ENCODE measurements at regions of chr6 and their contacts with region 1.

Region 1: GRCh38 chr6:90080876-90081481 is 186.7 kb downstream of the GJA10 start:
- DNase-seq: peak; percentile 40 to 89 (median 68)
- ATAC-seq: peak; percentile 80
- H3K4me3 ChIP-seq: peak overlapping the region; percentile 54 to 66
- H3K4me3 Mint-ChIP-seq: peak overlapping the region; percentile 98
- H3K27ac ChIP-seq: peak overlapping the region; percentile 66 to 77
- H3K27ac Mint-ChIP-seq: peak overlapping the region; percentile 99
- H3K4me1 ChIP-seq: peaks cover 75% of the 10 kb centered on the region
- H3K4me1 Mint-ChIP-seq: peaks cover 89% of the 10 kb centered on the region
- H3K27me3 ChIP-seq: no peaks in the 10 kb centered on the region
- H3K27me3 Mint-ChIP-seq: no peaks in the 10 kb centered on the region
- CTCF ChIP-seq: no peak

Region 2: GRCh38 chr6:89952686-89953085 is 128.3 kb before region 1 on chr6:
- CTCF ChIA-PET with region 1: no interaction called
- POLR2A ChIA-PET with region 1: interaction called, 3 read pairs
- intact Hi-C with region 1: loop called (anchors 1 to 10 kb)
- DNase-seq: peak; percentile 36 to 92 (median 65)
- ATAC-seq: peak; percentile 84
- H3K4me3 ChIP-seq: no peak overlapping the region
- H3K4me3 Mint-ChIP-seq: peak overlapping the region; percentile 71
- H3K27ac ChIP-seq: peak overlapping the region; percentile 24 to 47
- H3K27ac Mint-ChIP-seq: peak overlapping the region; percentile 94
- H3K4me1 ChIP-seq: peaks cover 55% of the 10 kb centered on the region
- H3K4me1 Mint-ChIP-seq: peaks cover 70% of the 10 kb centered on the region
- H3K27me3 ChIP-seq: no peaks in the 10 kb centered on the region
- H3K27me3 Mint-ChIP-seq: no peaks in the 10 kb centered on the region
- CTCF ChIP-seq: no peak

Region 3: GRCh38 chr6:89984926-89985750 is 95.8 kb before region 1 on chr6:
- CTCF ChIA-PET with region 1: no interaction called
- POLR2A ChIA-PET with region 1: no interaction called
- intact Hi-C with region 1: no loop called
- DNase-seq: no peak
- ATAC-seq: no peak
- H3K4me3 ChIP-seq: no peak overlapping the region
- H3K4me3 Mint-ChIP-seq: no peak overlapping the region
- H3K27ac ChIP-seq: no peak overlapping the region
- H3K27ac Mint-ChIP-seq: peak overlapping the region; percentile 55
- H3K4me1 ChIP-seq: peaks cover 37% of the 10 kb centered on the region
- H3K4me1 Mint-ChIP-seq: peaks cover 71% of the 10 kb centered on the region
- H3K27me3 ChIP-seq: no peaks in the 10 kb centered on the region
- H3K27me3 Mint-ChIP-seq: no peaks in the 10 kb centered on the region
- CTCF ChIP-seq: no peak

Region 4: DNA sequence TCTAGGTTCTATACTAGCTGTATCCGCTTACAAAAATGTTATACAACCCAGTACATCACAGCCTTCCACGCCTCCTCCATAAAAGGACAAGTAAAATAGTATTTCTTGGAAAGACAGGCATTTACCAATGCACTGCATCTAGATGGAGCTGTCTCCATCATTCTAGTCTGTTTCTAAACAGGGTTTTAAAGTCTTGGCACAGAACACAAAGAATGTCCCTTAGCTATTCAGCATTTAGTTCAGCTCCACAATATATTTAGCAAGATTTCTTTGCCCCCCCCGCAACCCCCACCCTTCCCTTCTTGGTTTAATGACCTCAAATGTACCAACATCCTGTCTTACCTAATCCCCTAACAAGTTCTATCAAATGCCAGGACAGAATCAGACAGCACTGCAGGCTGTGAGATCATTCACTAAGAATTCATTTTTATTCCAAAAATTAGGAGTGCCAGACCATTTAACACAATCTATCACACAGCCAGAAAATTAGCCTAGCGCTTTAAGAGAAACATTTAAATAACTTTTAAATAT is 17.1 kb after region 1 on chr6:
- CTCF ChIA-PET with region 1: interaction called, 4 read pairs
- POLR2A ChIA-PET with region 1: interaction called, 3 read pairs
- intact Hi-C with region 1: loop called in 1 of 2 experiments (anchors 2 kb)
- DNase-seq: peak in 4 of 9 experiments; percentile 24 to 64 (median 44)
- ATAC-seq: peak; percentile 74
- H3K4me3 ChIP-seq: no peak overlapping the region
- H3K4me3 Mint-ChIP-seq: no peak overlapping the region
- H3K27ac ChIP-seq: no peak overlapping the region
- H3K27ac Mint-ChIP-seq: peak overlapping the region; percentile 79
- H3K4me1 ChIP-seq: peaks cover 65% of the 10 kb centered on the region
- H3K4me1 Mint-ChIP-seq: peaks cover 78% of the 10 kb centered on the region
- H3K27me3 ChIP-seq: no peaks in the 10 kb centered on the region
- H3K27me3 Mint-ChIP-seq: no peaks in the 10 kb centered on the region
- CTCF ChIP-seq: no peak

Region 5: GRCh38 chr6:90110971-90111370 is 30.0 kb after region 1 on chr6:
- CTCF ChIA-PET with region 1: no interaction called
- POLR2A ChIA-PET with region 1: interaction called, 3 read pairs
- intact Hi-C with region 1: loop called (anchors 2 to 5 kb)
- DNase-seq: peak; percentile 34 to 88 (median 68)
- ATAC-seq: peak; percentile 85
- H3K4me3 ChIP-seq: no peak overlapping the region
- H3K4me3 Mint-ChIP-seq: peak overlapping the region; percentile 42
- H3K27ac ChIP-seq: peak overlapping the region in 1 of 2 experiments; percentile 42
- H3K27ac Mint-ChIP-seq: peak overlapping the region; percentile 86
- H3K4me1 ChIP-seq: peaks cover 53% of the 10 kb centered on the region
- H3K4me1 Mint-ChIP-seq: peaks cover 68% of the 10 kb centered on the region
- H3K27me3 ChIP-seq: no peaks in the 10 kb centered on the region
- H3K27me3 Mint-ChIP-seq: no peaks in the 10 kb centered on the region
- CTCF ChIP-seq: no peak

Region 6: DNA sequence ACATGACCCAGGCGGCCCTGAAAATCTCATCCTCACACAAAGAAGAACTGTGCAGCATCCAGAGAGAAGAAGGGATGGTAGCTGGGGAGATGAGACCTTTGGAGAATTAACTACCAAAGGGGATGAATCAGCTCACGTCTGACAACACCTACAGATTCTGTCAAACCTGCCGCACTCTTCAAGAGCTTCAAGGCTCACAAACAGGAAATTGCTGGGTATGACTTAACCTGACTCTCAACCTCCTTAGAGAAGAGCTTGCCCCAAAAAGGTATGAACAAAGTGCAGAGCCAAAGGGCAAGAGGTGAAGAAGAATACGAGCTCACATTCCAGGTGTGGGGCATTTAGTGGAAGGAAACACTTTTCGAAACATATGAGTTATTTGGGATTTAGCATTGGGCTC is 75.9 kb after region 1 on chr6:
- CTCF ChIA-PET with region 1: no interaction called
- POLR2A ChIA-PET with region 1: interaction called, 4 read pairs
- intact Hi-C with region 1: loop called in 1 of 2 experiments (anchors 2 kb)
- DNase-seq: peak in 8 of 9 experiments; percentile 15 to 78 (median 51)
- ATAC-seq: peak; percentile 98
- H3K4me3 ChIP-seq: peak overlapping the region in 1 of 2 experiments; percentile 14
- H3K4me3 Mint-ChIP-seq: peak overlapping the region; percentile 32
- H3K27ac ChIP-seq: peak overlapping the region; percentile 18 to 47
- H3K27ac Mint-ChIP-seq: peak overlapping the region; percentile 94
- H3K4me1 ChIP-seq: peaks cover 76% of the 10 kb centered on the region
- H3K4me1 Mint-ChIP-seq: peaks cover 82% of the 10 kb centered on the region
- H3K27me3 ChIP-seq: no peaks in the 10 kb centered on the region
- H3K27me3 Mint-ChIP-seq: no peaks in the 10 kb centered on the region
- CTCF ChIP-seq: no peak

Region 7: GRCh38 chr6:90179190-90180169 is 98.5 kb after region 1 on chr6:
- CTCF ChIA-PET with region 1: interaction called, 6 read pairs
- POLR2A ChIA-PET with region 1: interaction called, 3 read pairs
- intact Hi-C with region 1: loop called (anchors 2 to 5 kb)
- DNase-seq: peak in 4 of 9 experiments; percentile 29 to 65 (median 41)
- ATAC-seq: no peak
- H3K4me3 ChIP-seq: no peak overlapping the region
- H3K4me3 Mint-ChIP-seq: no peak overlapping the region
- H3K27ac ChIP-seq: no peak overlapping the region
- H3K27ac Mint-ChIP-seq: peak overlapping the region; percentile 94
- H3K4me1 ChIP-seq: peaks cover 67% of the 10 kb centered on the region
- H3K4me1 Mint-ChIP-seq: peaks cover 84% of the 10 kb centered on the region
- H3K27me3 ChIP-seq: no peaks in the 10 kb centered on the region
- H3K27me3 Mint-ChIP-seq: no peaks in the 10 kb centered on the region
- CTCF ChIP-seq: peak; percentile 73

Region 8: DNA sequence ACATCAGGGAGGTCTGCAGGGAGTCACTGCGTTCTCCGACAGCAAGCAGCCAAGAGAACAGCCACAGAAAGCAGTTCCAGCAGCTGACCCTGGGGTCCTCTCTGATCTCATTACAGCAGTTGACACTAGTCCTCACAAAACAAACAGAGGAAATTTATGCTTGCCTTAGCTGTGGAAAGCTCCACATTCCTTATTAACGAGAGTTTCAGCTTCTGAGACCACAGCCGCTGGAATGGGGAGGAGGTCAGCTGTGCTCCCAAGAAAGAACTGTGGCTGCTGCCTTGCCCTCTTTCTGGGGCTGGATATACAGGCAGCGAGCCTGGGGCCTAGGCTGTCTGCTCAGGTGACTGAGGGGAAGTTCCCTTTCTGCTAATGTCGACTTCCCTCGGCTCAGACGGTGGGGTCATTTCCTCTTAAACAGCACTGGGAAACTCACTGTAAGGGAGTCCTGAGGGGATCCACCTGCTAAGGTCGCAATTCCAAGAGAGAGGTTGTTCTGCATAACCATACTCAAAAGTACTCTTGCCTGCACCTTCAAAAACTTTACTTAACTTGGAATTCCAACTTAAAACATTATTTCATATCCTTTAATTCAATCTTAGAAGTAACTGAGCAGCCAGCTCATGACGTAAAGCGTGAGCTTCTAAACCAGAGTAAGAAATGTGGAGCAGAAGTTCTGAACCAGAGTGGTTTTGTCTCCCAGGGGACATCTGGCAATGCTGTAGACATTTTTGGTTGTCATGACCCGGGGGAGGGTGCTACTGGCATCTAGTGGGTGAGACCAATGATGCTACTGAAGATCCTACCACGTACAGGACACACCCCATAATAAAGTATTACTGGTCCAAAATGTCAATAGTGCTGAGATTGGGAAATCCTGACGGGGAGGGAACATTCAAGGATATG is 135.3 kb after region 1 on chr6:
- CTCF ChIA-PET with region 1: interaction called, 5 read pairs
- POLR2A ChIA-PET with region 1: interaction called, 3 read pairs
- intact Hi-C with region 1: loop called in 1 of 2 experiments (anchors 5 kb)
- DNase-seq: peak in 7 of 9 experiments; percentile 21 to 84 (median 62)
- ATAC-seq: peak; percentile 29
- H3K4me3 ChIP-seq: peak overlapping the region in 1 of 2 experiments; percentile 16
- H3K4me3 Mint-ChIP-seq: peak overlapping the region; percentile 21
- H3K27ac ChIP-seq: peak overlapping the region; percentile 39 to 71
- H3K27ac Mint-ChIP-seq: no peak overlapping the region
- H3K4me1 ChIP-seq: peaks cover 100% of the 10 kb centered on the region
- H3K4me1 Mint-ChIP-seq: peaks cover 31% of the 10 kb centered on the region
- H3K27me3 ChIP-seq: no peaks in the 10 kb centered on the region
- H3K27me3 Mint-ChIP-seq: no peaks in the 10 kb centered on the region
- CTCF ChIP-seq: no peak

Region 9: DNA sequence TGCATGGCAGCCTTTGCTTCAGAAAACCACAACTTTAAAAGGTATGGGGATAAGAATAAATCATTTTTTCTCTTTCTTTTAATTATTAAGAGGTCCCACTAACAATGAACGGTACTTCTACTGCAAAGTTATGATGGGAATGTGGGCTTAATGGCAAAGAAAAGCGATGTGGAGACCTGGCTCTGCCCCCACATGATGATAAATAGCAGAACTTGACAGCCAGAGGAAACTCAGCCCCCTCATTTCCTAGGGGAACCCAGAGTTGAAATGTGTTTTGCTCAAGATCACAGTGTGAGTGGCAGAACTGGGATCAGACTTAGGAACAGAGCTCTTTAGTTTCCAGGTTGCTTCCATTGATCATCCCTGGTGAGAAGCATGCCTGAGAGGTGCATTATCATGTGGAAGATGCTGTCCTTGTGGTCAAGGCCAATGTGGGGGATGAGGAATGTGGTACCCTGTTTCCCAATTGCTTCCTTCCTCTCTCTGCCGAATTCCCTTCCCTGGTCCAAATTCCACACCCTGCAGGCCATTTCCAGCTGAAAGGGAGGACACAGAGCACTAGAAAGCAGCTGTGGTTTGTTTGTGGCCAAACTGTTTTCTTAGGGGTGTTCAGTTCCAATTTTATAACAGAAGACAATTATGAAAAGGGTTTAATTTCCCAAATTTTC is 149.7 kb after region 1 on chr6:
- CTCF ChIA-PET with region 1: no interaction called
- POLR2A ChIA-PET with region 1: no interaction called
- intact Hi-C with region 1: no loop called
- DNase-seq: no peak
- ATAC-seq: no peak
- H3K4me3 ChIP-seq: no peak overlapping the region
- H3K4me3 Mint-ChIP-seq: peak overlapping the region; percentile 45
- H3K27ac ChIP-seq: peak overlapping the region in 1 of 2 experiments; percentile 32
- H3K27ac Mint-ChIP-seq: peak overlapping the region; percentile 95
- H3K4me1 ChIP-seq: peaks cover 95% of the 10 kb centered on the region
- H3K4me1 Mint-ChIP-seq: peaks cover 92% of the 10 kb centered on the region
- H3K27me3 ChIP-seq: no peaks in the 10 kb centered on the region
- H3K27me3 Mint-ChIP-seq: no peaks in the 10 kb centered on the region
- CTCF ChIP-seq: no peak

Region 10: DNA sequence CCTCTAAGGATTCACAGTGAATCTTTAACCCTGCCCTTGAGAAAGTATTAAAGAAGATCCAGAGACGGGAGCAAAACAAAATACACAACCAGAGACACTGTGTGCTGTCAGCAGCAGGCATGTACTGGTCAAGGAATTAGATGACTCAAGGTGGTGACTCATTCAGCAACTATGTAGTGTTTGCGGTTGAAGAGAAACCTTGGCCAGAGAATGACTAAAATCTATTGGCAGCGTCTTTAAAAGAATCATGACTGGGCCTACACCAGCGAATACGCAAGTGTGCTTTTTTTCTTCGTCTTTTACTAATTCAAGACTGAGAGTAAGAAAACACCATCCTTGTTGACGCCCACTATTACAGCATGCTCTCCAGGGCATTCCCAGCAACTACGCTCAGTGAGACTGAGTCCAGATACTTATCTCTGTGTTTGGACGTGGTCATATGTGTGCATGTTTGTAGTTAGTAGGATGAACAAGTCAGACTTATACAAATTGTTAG is 288.1 kb after region 1 on chr6:
- CTCF ChIA-PET with region 1: no interaction called
- POLR2A ChIA-PET with region 1: no interaction called
- intact Hi-C with region 1: no loop called
- DNase-seq: peak in 3 of 9 experiments; percentile 17 to 60 (median 55)
- ATAC-seq: peak; percentile 78
- H3K4me3 ChIP-seq: no peak overlapping the region
- H3K4me3 Mint-ChIP-seq: no peak overlapping the region
- H3K27ac ChIP-seq: no peak overlapping the region
- H3K27ac Mint-ChIP-seq: no peak overlapping the region
- H3K4me1 ChIP-seq: no peaks in the 10 kb centered on the region
- H3K4me1 Mint-ChIP-seq: peaks cover 11% of the 10 kb centered on the region
- H3K27me3 ChIP-seq: no peaks in the 10 kb centered on the region
- H3K27me3 Mint-ChIP-seq: no peaks in the 10 kb centered on the region
- CTCF ChIP-seq: no peak